ENCODE measurements at regions of chr3 and their contacts with region 1.

Region 1: GRCh38 chr3:149480325-149481017 is 6.0 kb downstream of the TM4SF4 start:
- DNase-seq: peak; percentile 69 to 75 (median 69)
- H3K4me3 ChIP-seq: no peak overlapping the region
- H3K4me3 Mint-ChIP-seq: no peak overlapping the region
- H3K27ac ChIP-seq: peak overlapping the region in 1 of 2 donors; percentile 5
- H3K27ac Mint-ChIP-seq: peak overlapping the region; percentile 46 to 88 (median 78)
- H3K4me1 ChIP-seq: peaks cover 41 to 47% of the 10 kb centered on the region in 2 donors
- H3K4me1 Mint-ChIP-seq: peaks cover 47% of the 10 kb centered on the region
- H3K27me3 ChIP-seq: no peaks in the 10 kb centered on the region
- H3K27me3 Mint-ChIP-seq: peaks cover 0 to 3% (median 0%) of the 10 kb centered on the region in 3 donors
- CTCF ChIP-seq: peak; percentile 85

Region 2: GRCh38 chr3:149188494-149188893 is 292.0 kb before region 1 on chr3:
- intact Hi-C with region 1: no loop called
- DNase-seq: no peak
- H3K4me3 ChIP-seq: no peak overlapping the region
- H3K4me3 Mint-ChIP-seq: no peak overlapping the region
- H3K27ac ChIP-seq: no peak overlapping the region
- H3K27ac Mint-ChIP-seq: no peak overlapping the region
- H3K4me1 ChIP-seq: no peaks in the 10 kb centered on the region
- H3K4me1 Mint-ChIP-seq: no peaks in the 10 kb centered on the region
- H3K27me3 ChIP-seq: no peaks in the 10 kb centered on the region
- H3K27me3 Mint-ChIP-seq: peaks cover 0 to 7% (median 1%) of the 10 kb centered on the region in 3 donors
- CTCF ChIP-seq: no peak

Region 3: GRCh38 chr3:149352556-149352955 is 127.9 kb before region 1 on chr3:
- intact Hi-C with region 1: loop called in 1 of 2 experiments (anchors 5 kb)
- DNase-seq: peak; percentile 36 to 69 (median 68)
- H3K4me3 ChIP-seq: no peak overlapping the region
- H3K4me3 Mint-ChIP-seq: no peak overlapping the region
- H3K27ac ChIP-seq: no peak overlapping the region
- H3K27ac Mint-ChIP-seq: no peak overlapping the region
- H3K4me1 ChIP-seq: no peaks in the 10 kb centered on the region
- H3K4me1 Mint-ChIP-seq: peaks cover 2% of the 10 kb centered on the region
- H3K27me3 ChIP-seq: no peaks in the 10 kb centered on the region
- H3K27me3 Mint-ChIP-seq: peaks cover 0 to 3% (median 3%) of the 10 kb centered on the region in 3 donors
- CTCF ChIP-seq: peak; percentile 84

Measured in CD14-positive monocyte (primary cell).